ENCODE measurements at regions of chr5 and their contacts with region 1.

Region 1: GRCh38 chr5:80407735-80408482 is at the start of gene ZFYVE16:
- DNase-seq: peak; percentile 98
- ATAC-seq: peak; percentile 84
- H3K4me3 ChIP-seq: peak within 1 kb of the TSS; percentile 87 to 99 (median 92)
- H3K4me3 Mint-ChIP-seq: peak within 1 kb of the TSS; percentile 97
- H3K27ac ChIP-seq: peak within 1 kb of the TSS; percentile 84 to 95
- H3K27ac Mint-ChIP-seq: peak within 1 kb of the TSS; percentile 99
- H3K4me1 ChIP-seq: peaks cover 13 to 17% of the 10 kb centered on the region in 2 donors
- H3K4me1 Mint-ChIP-seq: peaks cover 20% of the 10 kb centered on the region
- H3K27me3 ChIP-seq: no peaks in the 10 kb centered on the region
- H3K27me3 Mint-ChIP-seq: no peaks in the 10 kb centered on the region
- CTCF ChIP-seq: peak; percentile 18
- total RNA-seq, gene ZFYVE16: 38.3 and 44.4 TPM in 2 replicates

Region 2: DNA sequence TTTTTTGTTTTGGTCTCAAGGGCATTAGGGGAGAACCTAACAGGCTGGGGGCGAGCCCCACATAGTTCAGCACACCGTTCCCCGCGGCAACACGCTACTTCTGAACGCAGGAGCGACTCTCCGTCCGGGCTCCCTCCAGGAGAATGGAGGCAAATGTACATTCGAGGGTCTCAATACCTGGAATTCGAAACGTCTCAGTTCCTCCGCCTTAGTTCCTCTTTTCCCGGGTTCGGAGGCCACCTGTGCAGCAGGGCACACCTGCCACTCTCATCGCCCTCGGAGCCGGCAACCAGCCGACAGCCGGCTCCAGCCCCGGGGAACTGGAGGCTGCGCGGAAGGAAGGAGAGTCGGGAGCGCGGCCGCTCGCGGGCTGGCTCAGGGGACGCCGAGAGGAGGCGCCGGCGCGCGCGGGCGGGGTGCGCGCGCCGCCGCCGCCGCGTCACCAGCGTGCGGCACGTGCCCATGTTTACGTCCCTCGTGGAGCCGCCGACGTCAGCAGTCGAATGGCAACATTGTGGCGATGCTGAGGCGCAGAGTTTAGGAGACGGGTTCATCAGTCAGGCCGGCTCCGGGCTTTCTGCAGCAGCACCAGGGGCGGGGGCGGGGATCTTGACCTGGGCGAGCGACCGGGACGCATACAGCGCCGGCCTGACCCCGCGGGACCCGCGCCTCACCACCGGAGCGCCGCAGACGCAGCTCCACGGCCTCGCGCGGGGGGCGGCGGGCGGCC is 1172.1 kb before region 1 on chr5 and contains the start of gene JMY:
- CTCF ChIA-PET with region 1: interaction called, 3 read pairs
- POLR2A ChIA-PET with region 1: no interaction called
- intact Hi-C with region 1: loop called (anchors 10 kb)
- DNase-seq: peak; percentile 92
- ATAC-seq: peak; percentile 77
- H3K4me3 ChIP-seq: peak within 1 kb of the TSS; percentile 69 to 84 (median 77)
- H3K4me3 Mint-ChIP-seq: peak within 1 kb of the TSS; percentile 96
- H3K27ac ChIP-seq: peak within 1 kb of the TSS; percentile 86 to 87
- H3K27ac Mint-ChIP-seq: peak within 1 kb of the TSS; percentile 89
- H3K4me1 ChIP-seq: peaks cover 19 to 33% of the 10 kb centered on the region in 2 donors
- H3K4me1 Mint-ChIP-seq: peaks cover 30% of the 10 kb centered on the region
- H3K27me3 ChIP-seq: no peaks in the 10 kb centered on the region
- H3K27me3 Mint-ChIP-seq: no peaks in the 10 kb centered on the region
- CTCF ChIP-seq: no peak
- total RNA-seq, gene JMY: 20.4 and 20.5 TPM in 2 replicates

Region 3: DNA sequence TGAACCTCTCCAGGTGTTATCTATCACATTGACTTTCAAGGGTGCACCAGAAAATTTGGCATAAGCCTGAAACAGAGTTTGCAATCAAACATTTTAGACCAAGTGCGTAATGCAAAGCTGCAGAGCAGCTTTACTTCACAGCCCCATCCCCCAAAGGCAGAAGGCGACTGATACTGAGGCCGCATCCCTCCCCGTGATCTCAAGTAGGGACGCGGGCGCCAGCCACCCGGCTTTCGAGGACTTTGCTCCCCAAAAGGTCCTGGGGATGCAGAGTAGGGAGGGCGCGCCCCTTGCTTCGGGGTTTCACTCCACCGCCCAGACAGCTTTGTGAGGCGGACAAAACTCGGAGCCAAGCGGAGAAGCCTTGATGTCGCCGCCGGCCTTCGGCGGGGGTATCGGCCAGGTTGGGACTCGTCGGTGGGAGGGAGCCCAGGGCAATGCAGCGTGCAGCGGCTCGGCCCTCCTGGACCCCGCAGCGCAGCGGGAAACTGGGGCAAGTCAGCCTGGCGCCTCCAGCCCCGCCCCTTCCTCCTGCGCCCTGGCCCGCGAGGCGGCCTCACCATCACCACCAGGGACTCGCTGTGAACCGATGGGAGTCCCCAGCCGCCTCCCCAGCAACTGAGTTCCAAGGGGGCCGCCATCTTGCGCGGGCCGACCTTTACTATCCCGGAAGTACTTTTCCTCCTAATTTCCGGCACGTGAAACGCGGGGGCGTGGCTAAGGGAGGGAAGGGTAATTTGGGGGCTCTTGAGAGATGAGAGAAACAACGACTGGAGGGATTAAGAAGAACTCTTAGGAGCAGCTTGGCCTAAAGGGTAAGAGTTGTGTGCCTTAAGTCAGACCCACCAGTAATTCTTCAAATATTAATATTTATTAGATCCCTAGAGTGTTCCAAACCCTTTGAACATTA is 417.1 kb before region 1 on chr5 and contains the start of gene MTX3:
- CTCF ChIA-PET with region 1: no interaction called
- POLR2A ChIA-PET with region 1: no interaction called
- intact Hi-C with region 1: loop called (anchors 1 kb)
- DNase-seq: peak; percentile 89
- ATAC-seq: peak; percentile 96
- H3K4me3 ChIP-seq: peak within 1 kb of the TSS; percentile 71 to 90 (median 78)
- H3K4me3 Mint-ChIP-seq: peak within 1 kb of the TSS; percentile 81
- H3K27ac ChIP-seq: peak within 1 kb of the TSS; percentile 65 to 70
- H3K27ac Mint-ChIP-seq: peak within 1 kb of the TSS; percentile 91
- H3K4me1 ChIP-seq: peaks cover 16% of the 10 kb centered on the region in 2 donors
- H3K4me1 Mint-ChIP-seq: peaks cover 17% of the 10 kb centered on the region
- H3K27me3 ChIP-seq: no peaks in the 10 kb centered on the region
- H3K27me3 Mint-ChIP-seq: peaks cover 9% of the 10 kb centered on the region
- CTCF ChIP-seq: no peak
- total RNA-seq, gene MTX3: 21.0 and 22.0 TPM in 2 replicates

Region 4: GRCh38 chr5:80346055-80346454 is 61.9 kb before region 1 on chr5:
- CTCF ChIA-PET with region 1: interaction called, 6 read pairs
- POLR2A ChIA-PET with region 1: no interaction called
- intact Hi-C with region 1: loop called (anchors 1 kb)
- DNase-seq: peak; percentile 48
- ATAC-seq: no peak
- H3K4me3 ChIP-seq: no peak overlapping the region
- H3K4me3 Mint-ChIP-seq: no peak overlapping the region
- H3K27ac ChIP-seq: no peak overlapping the region
- H3K27ac Mint-ChIP-seq: no peak overlapping the region
- H3K4me1 ChIP-seq: no peaks in the 10 kb centered on the region
- H3K4me1 Mint-ChIP-seq: no peaks in the 10 kb centered on the region
- H3K27me3 ChIP-seq: no peaks in the 10 kb centered on the region
- H3K27me3 Mint-ChIP-seq: peaks cover 13% of the 10 kb centered on the region
- CTCF ChIP-seq: peak; percentile 56

Region 5: GRCh38 chr5:81301271-81302015 is 893.5 kb after region 1 on chr5 and contains the start of gene ZCCHC9:
- CTCF ChIA-PET with region 1: no interaction called
- POLR2A ChIA-PET with region 1: no interaction called
- intact Hi-C with region 1: loop called (anchors 5 kb)
- DNase-seq: peak; percentile 95
- ATAC-seq: peak; percentile 92
- H3K4me3 ChIP-seq: peak within 1 kb of the TSS; percentile 77 to 98 (median 91)
- H3K4me3 Mint-ChIP-seq: peak within 1 kb of the TSS; percentile 91
- H3K27ac ChIP-seq: peak within 1 kb of the TSS; percentile 63 to 89
- H3K27ac Mint-ChIP-seq: peak within 1 kb of the TSS; percentile 93
- H3K4me1 ChIP-seq: peaks cover 23 to 26% of the 10 kb centered on the region in 2 donors
- H3K4me1 Mint-ChIP-seq: peaks cover 33% of the 10 kb centered on the region
- H3K27me3 ChIP-seq: no peaks in the 10 kb centered on the region
- H3K27me3 Mint-ChIP-seq: no peaks in the 10 kb centered on the region
- CTCF ChIP-seq: peak; percentile 29
- total RNA-seq, gene ZCCHC9: 23.0 and 23.7 TPM in 2 replicates

Measured in B cell (primary cell).